ENCODE measurements at regions of chr15 and their contacts with region 1.

Region 1: DNA sequence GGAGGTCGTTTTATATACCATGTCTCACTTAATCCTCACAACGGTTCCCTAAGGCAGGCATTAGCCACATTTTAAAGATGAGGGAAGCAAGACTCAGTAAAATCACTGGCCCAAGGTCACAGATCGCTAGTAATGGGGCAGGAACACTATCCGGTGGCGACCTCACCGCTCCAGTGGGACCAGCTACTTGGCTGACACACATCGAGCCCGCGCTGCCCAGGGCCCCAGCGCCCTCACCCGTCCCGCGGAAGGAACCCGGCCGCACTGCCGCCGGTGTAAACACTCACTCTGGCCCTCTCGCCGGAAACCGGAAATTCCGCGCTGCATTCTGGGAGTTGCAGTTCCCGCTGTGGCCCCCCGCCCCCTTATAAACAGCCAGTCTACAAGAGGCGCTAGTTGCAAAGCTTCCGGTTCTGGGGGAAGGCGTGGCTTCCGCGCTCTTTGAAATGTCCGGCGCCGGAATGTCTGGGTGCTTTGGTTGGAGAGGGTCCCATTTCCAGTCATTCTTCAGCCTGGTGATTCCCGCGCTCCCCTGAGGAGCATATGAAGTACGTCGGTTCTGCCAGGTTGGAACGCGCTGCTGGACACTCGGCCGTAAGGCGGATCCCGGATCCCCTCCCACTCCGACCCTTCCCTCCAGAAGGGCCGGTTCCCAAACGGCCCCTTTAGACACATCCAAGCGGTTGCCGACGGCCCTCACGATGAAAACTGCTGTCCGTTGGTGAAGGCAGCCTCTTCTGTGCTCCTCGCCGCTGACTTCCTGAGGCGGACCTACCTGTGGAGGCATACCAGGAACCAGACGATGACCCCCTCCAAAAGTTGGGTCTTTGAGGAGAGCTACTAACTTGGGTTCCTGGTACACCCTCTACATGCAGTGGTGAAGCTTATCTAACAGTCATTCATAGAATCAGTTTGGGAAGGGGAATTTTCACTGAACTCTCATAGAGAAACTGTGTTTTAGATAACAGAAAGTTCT is at the start of gene UBL7:
- DNase-seq: peak; percentile 81 to 95 (median 90)
- ATAC-seq: peak; percentile 99
- H3K4me3 ChIP-seq: peak within 1 kb of the TSS; percentile 91
- H3K4me3 Mint-ChIP-seq: peak within 1 kb of the TSS; percentile 88 to 98 (median 92)
- H3K27ac ChIP-seq: peak within 1 kb of the TSS; percentile 86
- H3K27ac Mint-ChIP-seq: peak within 1 kb of the TSS; percentile 78 to 96 (median 92)
- H3K4me1 ChIP-seq: peaks cover 8 to 15% of the 10 kb centered on the region in 2 donors
- H3K4me1 Mint-ChIP-seq: peaks cover 25 to 62% (median 55%) of the 10 kb centered on the region in 7 donors
- H3K27me3 ChIP-seq: no peaks in the 10 kb centered on the region
- H3K27me3 Mint-ChIP-seq: no peaks in the 10 kb centered on the region
- total RNA-seq, gene UBL7: 20.2 to 50.7 (median 40.6) TPM

Region 2: GRCh38 chr15:74373731-74374647 is 87.2 kb before region 1 on chr15:
- CTCF ChIA-PET with region 1: interaction called, 5 read pairs
- POLR2A ChIA-PET with region 1: interaction called, 8 read pairs
- intact Hi-C with region 1: loop called (anchors 1 kb)
- DNase-seq: peak; percentile 82 to 94 (median 91)
- ATAC-seq: peak; percentile 97
- H3K4me3 ChIP-seq: peak overlapping the region; percentile 98
- H3K4me3 Mint-ChIP-seq: peak overlapping the region; percentile 68 to 89 (median 84)
- H3K27ac ChIP-seq: peak overlapping the region; percentile 62
- H3K27ac Mint-ChIP-seq: peak overlapping the region; percentile 18 to 82 (median 40)
- H3K4me1 ChIP-seq: peaks cover 9% of the 10 kb centered on the region in 2 donors
- H3K4me1 Mint-ChIP-seq: peaks cover 0 to 32% (median 15%) of the 10 kb centered on the region in 7 donors
- H3K27me3 ChIP-seq: no peaks in the 10 kb centered on the region
- H3K27me3 Mint-ChIP-seq: peaks cover 0 to 31% (median 5%) of the 10 kb centered on the region in 5 donors

Region 3: DNA sequence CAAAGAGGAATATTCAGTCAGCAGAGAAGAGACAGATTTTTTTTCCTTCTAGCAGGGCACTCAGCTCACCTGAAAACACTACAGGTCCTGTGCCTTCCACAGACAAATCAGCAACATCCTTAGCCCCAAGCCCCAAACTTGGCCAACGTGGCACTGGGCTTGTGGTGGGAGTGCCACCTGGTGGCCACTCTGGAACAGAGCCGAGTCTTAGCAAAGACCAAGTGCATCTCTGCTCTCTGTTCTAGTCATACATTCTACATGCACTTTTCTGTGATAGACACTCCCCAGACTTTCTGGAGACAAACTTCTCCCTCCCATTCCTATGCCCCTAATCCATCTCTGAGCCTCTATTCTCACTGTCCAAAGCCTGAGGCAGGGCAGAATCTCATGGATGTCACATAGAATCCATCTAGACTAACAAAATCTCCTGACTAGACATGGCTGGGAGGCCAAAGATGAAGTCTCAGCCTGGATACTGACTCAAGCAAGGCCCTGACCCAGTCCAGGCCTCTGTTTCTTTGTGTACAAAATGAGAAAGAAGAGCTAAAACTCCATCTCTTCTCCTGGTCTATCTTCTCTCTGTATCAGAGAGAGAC is 22.3 kb before region 1 on chr15:
- CTCF ChIA-PET with region 1: no interaction called
- POLR2A ChIA-PET with region 1: no interaction called
- intact Hi-C with region 1: loop called (anchors 1 to 2 kb)
- DNase-seq: peak; percentile 52 to 76 (median 72)
- ATAC-seq: peak; percentile 84
- H3K4me3 ChIP-seq: no peak overlapping the region
- H3K4me3 Mint-ChIP-seq: no peak overlapping the region
- H3K27ac ChIP-seq: no peak overlapping the region
- H3K27ac Mint-ChIP-seq: peak overlapping the region in 3 of 9 donors; percentile 11 to 55 (median 43)
- H3K4me1 ChIP-seq: peaks cover 6 to 11% of the 10 kb centered on the region in 2 donors
- H3K4me1 Mint-ChIP-seq: peaks cover 7 to 30% (median 15%) of the 10 kb centered on the region in 7 donors
- H3K27me3 ChIP-seq: no peaks in the 10 kb centered on the region
- H3K27me3 Mint-ChIP-seq: no peaks in the 10 kb centered on the region

Region 4: DNA sequence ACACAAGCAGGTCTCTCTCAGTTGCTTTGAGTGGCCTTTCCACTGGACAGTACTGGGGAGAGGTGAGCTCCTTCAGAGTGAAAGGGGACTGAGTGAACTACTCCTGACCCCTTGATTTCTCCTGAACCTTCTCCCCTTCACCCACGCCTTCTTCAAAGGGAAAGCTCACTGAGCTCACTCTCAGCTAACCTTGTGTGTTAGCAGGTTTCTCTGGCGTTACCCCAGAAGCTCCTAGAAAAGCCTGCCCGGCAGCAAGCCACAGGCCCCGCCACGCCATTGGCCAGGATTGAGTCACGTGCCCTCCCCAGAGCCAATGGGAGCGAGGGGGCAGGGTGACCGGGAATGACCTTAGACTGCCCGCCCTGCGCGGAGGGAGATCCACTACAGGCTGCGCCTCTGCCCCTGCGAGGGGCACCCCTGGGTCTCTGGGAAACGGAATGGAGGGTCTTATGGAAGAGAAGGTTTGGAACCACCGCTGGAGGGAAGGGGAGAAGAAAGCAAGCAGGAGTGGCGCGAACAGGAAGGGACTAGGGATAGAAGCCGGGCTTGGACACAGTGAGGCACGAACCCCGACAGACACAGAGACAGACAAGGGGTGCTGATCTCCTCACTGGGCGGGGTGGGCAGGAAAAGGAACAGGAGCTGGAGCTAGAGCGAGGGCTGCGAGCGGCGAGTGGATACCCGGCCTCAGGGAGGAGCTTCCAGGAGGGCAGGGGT is 137.1 kb after region 1 on chr15:
- CTCF ChIA-PET with region 1: no interaction called
- POLR2A ChIA-PET with region 1: interaction called, 3 read pairs
- intact Hi-C with region 1: loop called (anchors 1 kb)
- DNase-seq: peak; percentile 71 to 91 (median 79)
- ATAC-seq: peak; percentile 98
- H3K4me3 ChIP-seq: peak overlapping the region; percentile 83
- H3K4me3 Mint-ChIP-seq: peak overlapping the region; percentile 90 to 100 (median 98)
- H3K27ac ChIP-seq: peak overlapping the region; percentile 79
- H3K27ac Mint-ChIP-seq: peak overlapping the region; percentile 89 to 99 (median 98)
- H3K4me1 ChIP-seq: peaks cover 6 to 13% of the 10 kb centered on the region in 2 donors
- H3K4me1 Mint-ChIP-seq: peaks cover 16 to 24% (median 21%) of the 10 kb centered on the region in 7 donors
- H3K27me3 ChIP-seq: no peaks in the 10 kb centered on the region
- H3K27me3 Mint-ChIP-seq: no peaks in the 10 kb centered on the region

Region 5: GRCh38 chr15:74787251-74788041 is 326.3 kb after region 1 on chr15:
- CTCF ChIA-PET with region 1: no interaction called
- POLR2A ChIA-PET with region 1: no interaction called
- intact Hi-C with region 1: loop called in 1 of 2 experiments (anchors 5 kb)
- DNase-seq: peak; percentile 69 to 97 (median 96)
- ATAC-seq: peak; percentile 85
- H3K4me3 ChIP-seq: peak overlapping the region; percentile 85
- H3K4me3 Mint-ChIP-seq: peak overlapping the region; percentile 87 to 97 (median 93)
- H3K27ac ChIP-seq: peak overlapping the region; percentile 92
- H3K27ac Mint-ChIP-seq: peak overlapping the region; percentile 95 to 99 (median 98)
- H3K4me1 ChIP-seq: peaks cover 66 to 72% of the 10 kb centered on the region in 2 donors
- H3K4me1 Mint-ChIP-seq: peaks cover 57 to 78% (median 75%) of the 10 kb centered on the region in 7 donors
- H3K27me3 ChIP-seq: no peaks in the 10 kb centered on the region
- H3K27me3 Mint-ChIP-seq: no peaks in the 10 kb centered on the region

Region 6: DNA sequence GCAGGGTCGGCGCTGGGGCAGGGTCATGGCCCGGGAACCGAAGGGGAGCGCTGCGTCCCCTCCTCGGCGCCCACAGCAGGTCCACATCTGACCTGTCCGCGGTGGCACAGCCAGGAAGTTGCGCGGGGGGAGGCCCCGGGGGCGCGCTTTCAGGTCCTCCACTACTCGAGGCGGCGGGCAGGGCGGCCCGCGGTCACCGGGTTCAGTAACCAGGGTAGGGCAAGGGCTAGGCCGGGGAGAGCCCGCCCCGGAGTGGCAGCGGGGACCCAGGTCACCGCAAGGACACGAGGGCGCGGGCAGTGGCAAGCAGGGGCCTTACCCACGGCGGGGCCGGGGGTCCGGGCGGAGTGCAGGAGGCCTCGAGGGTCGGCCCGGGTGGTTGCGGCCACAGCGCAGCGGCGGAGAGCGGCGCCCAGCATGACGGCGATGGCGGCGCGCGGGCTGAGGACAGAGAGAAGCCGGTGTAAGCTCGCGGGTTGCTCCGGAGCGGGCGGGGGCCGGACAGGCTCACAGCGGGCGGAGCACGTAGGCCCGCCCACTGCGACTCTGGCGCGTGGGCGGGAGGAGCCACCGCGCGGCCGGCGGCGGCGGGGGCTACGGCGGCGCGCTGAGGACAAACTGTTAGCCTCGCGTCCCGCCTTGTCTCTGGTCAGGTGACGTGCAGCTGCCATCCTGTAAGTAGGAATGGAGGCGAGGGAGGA is 476.6 kb after region 1 on chr15 and contains the start of gene COX5A:
- CTCF ChIA-PET with region 1: no interaction called
- POLR2A ChIA-PET with region 1: no interaction called
- intact Hi-C with region 1: loop called in 1 of 2 experiments (anchors 1 kb)
- DNase-seq: peak; percentile 86 to 94 (median 92)
- ATAC-seq: peak; percentile 99
- H3K4me3 ChIP-seq: peak within 1 kb of the TSS; percentile 62
- H3K4me3 Mint-ChIP-seq: peak within 1 kb of the TSS; percentile 87 to 97 (median 94)
- H3K27ac ChIP-seq: peak within 1 kb of the TSS; percentile 85
- H3K27ac Mint-ChIP-seq: peak within 1 kb of the TSS; percentile 85 to 95 (median 91)
- H3K4me1 ChIP-seq: peaks cover 0 to 17% of the 10 kb centered on the region in 2 donors
- H3K4me1 Mint-ChIP-seq: peaks cover 16 to 38% (median 26%) of the 10 kb centered on the region in 7 donors
- H3K27me3 ChIP-seq: no peaks in the 10 kb centered on the region
- H3K27me3 Mint-ChIP-seq: peaks cover 0 to 3% (median 0%) of the 10 kb centered on the region in 5 donors
- total RNA-seq, gene COX5A: 44.4 to 210 (median 59.2) TPM

Region 7: DNA sequence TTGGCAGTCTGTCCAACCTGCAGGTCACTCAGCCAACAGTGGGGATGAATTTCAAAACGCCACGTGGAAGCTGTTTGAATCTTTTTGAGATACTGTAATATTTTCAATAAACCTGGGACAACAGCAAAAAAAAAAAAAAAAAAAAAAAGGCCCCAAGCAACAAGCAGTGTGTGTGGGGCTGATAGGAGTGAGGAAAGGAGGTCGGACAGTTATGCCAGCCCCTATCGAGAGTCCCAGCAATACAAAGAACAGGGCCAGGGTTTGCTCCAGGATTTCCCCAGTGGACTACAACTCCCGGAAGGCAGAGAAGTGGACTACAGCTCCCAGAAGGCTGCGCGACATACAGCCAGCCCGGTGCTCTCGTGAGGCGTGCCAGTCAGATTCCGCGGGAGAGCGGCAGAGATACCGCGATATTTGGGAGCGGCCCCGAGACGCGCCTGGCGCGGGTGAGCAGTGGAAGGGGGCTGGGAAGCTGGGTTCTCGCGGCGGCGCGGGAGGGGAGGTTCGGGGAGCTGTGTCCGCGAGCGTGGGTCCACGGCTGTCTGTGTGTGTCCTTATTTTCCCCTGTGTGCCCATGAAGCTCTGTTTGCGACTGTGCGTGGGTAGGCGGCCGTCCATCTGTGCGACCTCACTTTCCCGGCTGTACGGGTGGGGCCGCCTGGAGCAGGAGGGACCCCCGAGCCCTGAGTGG is 562.2 kb after region 1 on chr15 and contains the start of gene PPCDC:
- CTCF ChIA-PET with region 1: no interaction called
- POLR2A ChIA-PET with region 1: no interaction called
- intact Hi-C with region 1: loop called in 1 of 2 experiments (anchors 1 kb)
- DNase-seq: peak; percentile 79 to 94 (median 91)
- ATAC-seq: peak; percentile 100
- H3K4me3 ChIP-seq: peak within 1 kb of the TSS; percentile 84
- H3K4me3 Mint-ChIP-seq: peak within 1 kb of the TSS; percentile 81 to 99 (median 97)
- H3K27ac ChIP-seq: peak within 1 kb of the TSS; percentile 84
- H3K27ac Mint-ChIP-seq: peak within 1 kb of the TSS; percentile 87 to 98 (median 93)
- H3K4me1 ChIP-seq: no peaks in the 10 kb centered on the region
- H3K4me1 Mint-ChIP-seq: peaks cover 11 to 30% (median 26%) of the 10 kb centered on the region in 7 donors
- H3K27me3 ChIP-seq: no peaks in the 10 kb centered on the region
- H3K27me3 Mint-ChIP-seq: no peaks in the 10 kb centered on the region
- total RNA-seq, gene PPCDC: 11.7 to 31.3 (median 17.1) TPM

Measured in naive thymus-derived CD4-positive, alpha-beta T cell (primary cell).